ENCODE measurements at regions of chr17 and their contacts with region 1.

Region 1: GRCh38 chr17:65231662-65232335 is 94.6 kb downstream of the RGS9 start:
- DNase-seq: peak; percentile 71
- H3K4me3 ChIP-seq: no peak overlapping the region
- H3K27ac ChIP-seq: no peak overlapping the region
- H3K4me1 ChIP-seq: no peaks in the 10 kb centered on the region
- CTCF ChIP-seq: peak; percentile 85

Region 2: DNA sequence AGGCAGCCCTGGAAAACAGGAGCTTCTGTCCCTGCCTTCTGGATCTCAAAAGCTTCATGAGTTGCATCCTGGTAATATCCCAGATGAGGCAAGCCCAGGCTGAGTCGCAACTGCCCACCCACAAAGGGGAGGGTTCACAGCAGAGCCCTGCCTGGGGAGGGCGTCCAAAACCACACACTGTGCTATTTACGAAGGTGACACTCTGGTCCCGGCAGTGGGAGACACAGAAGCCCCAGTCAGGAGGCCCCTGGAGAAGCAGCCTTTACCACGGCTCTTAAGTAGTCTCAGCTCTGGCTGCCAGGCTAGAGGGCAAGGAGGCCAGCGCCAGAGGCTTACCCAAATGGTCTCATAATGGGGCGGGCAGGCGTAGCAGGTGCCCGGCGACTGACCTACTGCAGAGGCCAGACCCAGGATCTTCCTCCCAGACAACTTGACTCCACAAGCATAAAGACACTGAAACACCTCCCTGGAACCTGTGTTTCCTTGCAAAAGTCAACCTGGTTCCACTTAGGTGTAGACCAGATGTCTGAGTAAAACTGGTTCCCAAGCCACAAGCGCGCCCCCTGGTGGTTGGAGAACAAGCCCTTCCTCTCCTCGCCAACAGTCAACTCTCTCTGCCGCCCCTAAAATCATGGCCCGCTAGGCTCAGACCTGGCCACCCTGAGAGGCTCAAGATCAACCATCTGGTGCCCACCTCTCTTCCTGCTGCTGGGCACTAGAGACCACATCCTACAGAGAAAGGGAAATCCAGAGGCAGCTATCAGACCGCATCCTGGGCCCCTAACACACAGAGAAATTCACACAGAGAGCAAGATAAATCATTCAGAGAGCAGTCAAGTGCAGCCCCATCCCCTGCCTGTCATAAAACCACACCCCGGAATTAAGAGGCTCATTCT is 324.5 kb after region 1 on chr17:
- CTCF ChIA-PET with region 1: no interaction called
- POLR2A ChIA-PET with region 1: no interaction called
- intact Hi-C with region 1: loop called (anchors 10 kb)
- DNase-seq: peak; percentile 75
- H3K4me3 ChIP-seq: no peak overlapping the region
- H3K27ac ChIP-seq: no peak overlapping the region
- H3K4me1 ChIP-seq: peaks cover 12% of the 10 kb centered on the region
- CTCF ChIP-seq: peak; percentile 95

Region 3: GRCh38 chr17:65988081-65988850 is 756.5 kb after region 1 on chr17:
- CTCF ChIA-PET with region 1: no interaction called
- POLR2A ChIA-PET with region 1: no interaction called
- intact Hi-C with region 1: loop called (anchors 2 kb)
- DNase-seq: peak; percentile 38
- H3K4me3 ChIP-seq: no peak overlapping the region
- H3K27ac ChIP-seq: no peak overlapping the region
- H3K4me1 ChIP-seq: no peaks in the 10 kb centered on the region
- CTCF ChIP-seq: peak; percentile 82

Measured in OCI-LY7 (cell line).